Gastrocnemius medialis (tissue), 4 donors: ENCODE measurements at regions of chr15 and their contacts with region 1.

Region 1: GRCh38 chr15:63048115-63048775 is 5.7 kb downstream of the TPM1 start:
- DNase-seq: peak; percentile 78 to 86
- ATAC-seq: peak; percentile 75 to 78
- H3K4me3 ChIP-seq: peak overlapping the region; percentile 72 to 94 (median 80)
- H3K27ac ChIP-seq: peak overlapping the region; percentile 86 to 96 (median 91)
- H3K4me1 ChIP-seq: peaks cover 70 to 74% of the 10 kb centered on the region in 2 donors
- H3K27me3 ChIP-seq: peaks cover 0 to 19% (median 0%) of the 10 kb centered on the region in 3 donors
- CTCF ChIP-seq: peak; percentile 97 to 99 (median 98)
- POLR2A ChIP-seq: peak; percentile 61 to 74

Region 2: GRCh38 chr15:63157118-63157843 is 109.0 kb after region 1 on chr15 and contains the start of gene RPS27L:
- in situ Hi-C with region 1: no loop called
- intact Hi-C with region 1: loop called (anchors 10 kb)
- DNase-seq: peak; percentile 89
- ATAC-seq: peak; percentile 92 to 93
- H3K4me3 ChIP-seq: peak within 1 kb of the TSS; percentile 68 to 91 (median 89)
- H3K27ac ChIP-seq: peak within 1 kb of the TSS; percentile 86 to 98 (median 94)
- H3K4me1 ChIP-seq: peaks cover 13 to 28% of the 10 kb centered on the region in 2 donors
- H3K27me3 ChIP-seq: no peaks in the 10 kb centered on the region
- CTCF ChIP-seq: no peak
- POLR2A ChIP-seq: peak; percentile 84 to 87
- total RNA-seq, gene RPS27L: 53.0 to 145 (median 78.0) TPM